ENCODE measurements at regions of chr14 and their contacts with region 1.

Region 1: DNA sequence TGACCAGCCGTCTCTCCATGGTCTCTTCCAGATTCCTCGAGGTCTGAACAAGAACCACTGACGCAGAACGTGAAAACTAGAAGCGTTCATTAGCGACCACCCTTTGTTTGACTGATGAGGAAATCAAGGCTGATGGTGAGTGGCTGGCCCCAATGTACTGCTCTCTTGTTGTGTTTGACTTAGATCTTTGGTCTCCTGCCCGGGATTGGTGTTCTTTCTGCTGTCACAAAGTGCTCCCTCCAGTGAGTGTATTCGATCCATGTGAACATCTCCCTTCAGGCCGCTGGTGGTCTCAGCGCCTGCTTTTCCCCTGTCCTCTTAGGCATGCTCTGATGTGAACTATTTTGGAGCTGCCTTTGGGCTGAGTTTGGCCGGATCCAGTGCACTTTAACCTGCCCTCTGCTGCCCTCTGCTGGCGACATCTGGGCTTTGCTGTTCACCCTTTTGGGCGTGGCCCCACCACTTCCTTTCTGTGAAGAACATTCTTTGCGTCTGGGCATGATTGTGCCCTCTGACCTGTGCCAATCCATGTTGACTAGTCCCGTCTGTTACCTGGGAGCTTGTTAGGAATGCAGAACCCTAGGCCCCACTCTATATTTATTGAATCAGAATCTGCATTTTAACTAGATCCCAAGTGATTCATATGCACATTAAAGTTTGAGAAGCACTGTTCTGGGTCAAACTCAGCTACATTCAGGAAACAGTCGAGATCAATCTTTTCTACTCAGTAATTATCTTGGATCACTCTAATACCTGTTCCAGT is 279.2 kb downstream of the TTC6 start:
- DNase-seq: peak; percentile 71 to 83
- ATAC-seq: peak; percentile 67 to 92 (median 81)
- H3K4me3 ChIP-seq: no peak overlapping the region
- H3K27ac ChIP-seq: no peak overlapping the region
- H3K4me1 ChIP-seq: peaks cover 0 to 10% (median 0%) of the 10 kb centered on the region in 9 donors
- H3K27me3 ChIP-seq: no peaks in the 10 kb centered on the region
- CTCF ChIP-seq: peak; percentile 66 to 91 (median 83)

Region 2: DNA sequence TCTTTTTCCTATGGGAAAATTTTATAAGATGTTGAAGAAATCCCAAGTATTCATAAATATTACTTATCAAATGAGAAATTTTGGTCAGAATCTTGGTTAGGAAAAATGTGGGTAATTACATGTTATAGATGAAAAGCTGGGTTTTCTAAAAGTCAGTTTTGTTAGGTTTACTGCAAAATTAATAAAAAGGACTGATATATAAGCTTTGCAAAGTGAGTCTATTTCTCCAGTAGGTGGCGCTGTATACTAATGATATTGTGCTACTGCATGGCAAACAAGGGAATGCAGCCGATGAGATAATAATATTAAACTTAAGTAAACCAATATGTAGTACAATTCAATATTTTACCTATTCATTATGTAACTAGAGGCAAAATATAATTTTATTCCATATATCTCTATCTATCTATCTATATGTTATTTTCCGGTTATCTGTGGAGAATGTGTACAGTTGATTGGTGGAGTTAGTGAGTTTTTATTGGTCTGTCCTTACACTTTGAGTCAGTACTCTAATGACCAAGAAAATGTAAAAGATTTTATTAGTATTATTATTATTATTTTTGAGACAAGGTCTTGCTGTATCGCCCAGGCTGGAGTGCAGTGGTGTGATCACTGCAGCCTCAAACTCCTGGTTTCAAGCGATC is 643.9 kb before region 1 on chr14:
- intact Hi-C with region 1: loop called in 1 of 10 experiments (anchors 5 kb)
- DNase-seq: peak in 1 of 2 donors; percentile 16
- ATAC-seq: peak in 1 of 8 donors; percentile 55
- H3K4me3 ChIP-seq: no peak overlapping the region
- H3K27ac ChIP-seq: no peak overlapping the region
- H3K4me1 ChIP-seq: no peaks in the 10 kb centered on the region
- H3K27me3 ChIP-seq: no peaks in the 10 kb centered on the region
- CTCF ChIP-seq: peak; percentile 42 to 88 (median 79)

Region 3: DNA sequence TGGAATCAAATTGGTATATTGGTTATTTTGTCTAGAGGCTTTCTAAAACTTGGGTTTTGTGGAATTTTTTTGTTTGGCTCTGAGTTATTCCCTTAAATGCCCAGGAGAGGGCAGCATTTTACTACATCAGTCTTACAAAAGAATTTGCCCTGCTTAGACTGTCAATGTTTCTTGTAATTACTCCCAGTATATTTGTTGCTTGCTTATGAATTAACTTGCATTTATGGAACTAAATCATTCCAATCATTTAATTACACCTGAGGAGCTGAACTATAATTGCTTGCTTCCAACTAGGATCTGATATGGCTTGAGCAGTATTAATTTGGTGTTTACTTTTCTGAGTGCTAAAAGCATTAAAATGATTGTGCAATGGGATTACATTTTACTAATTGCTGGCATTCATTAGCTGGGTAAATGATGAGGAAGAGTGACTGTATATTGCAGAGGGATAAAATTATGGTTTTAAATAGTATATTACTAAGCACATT is 628.1 kb before region 1 on chr14:
- intact Hi-C with region 1: loop called in 9 of 10 experiments (anchors 2 to 10 kb)
- DNase-seq: no peak
- ATAC-seq: no peak
- H3K4me3 ChIP-seq: no peak overlapping the region
- H3K27ac ChIP-seq: no peak overlapping the region
- H3K4me1 ChIP-seq: no peaks in the 10 kb centered on the region
- H3K27me3 ChIP-seq: no peaks in the 10 kb centered on the region
- CTCF ChIP-seq: peak; percentile 52 to 88 (median 76)

Region 4: DNA sequence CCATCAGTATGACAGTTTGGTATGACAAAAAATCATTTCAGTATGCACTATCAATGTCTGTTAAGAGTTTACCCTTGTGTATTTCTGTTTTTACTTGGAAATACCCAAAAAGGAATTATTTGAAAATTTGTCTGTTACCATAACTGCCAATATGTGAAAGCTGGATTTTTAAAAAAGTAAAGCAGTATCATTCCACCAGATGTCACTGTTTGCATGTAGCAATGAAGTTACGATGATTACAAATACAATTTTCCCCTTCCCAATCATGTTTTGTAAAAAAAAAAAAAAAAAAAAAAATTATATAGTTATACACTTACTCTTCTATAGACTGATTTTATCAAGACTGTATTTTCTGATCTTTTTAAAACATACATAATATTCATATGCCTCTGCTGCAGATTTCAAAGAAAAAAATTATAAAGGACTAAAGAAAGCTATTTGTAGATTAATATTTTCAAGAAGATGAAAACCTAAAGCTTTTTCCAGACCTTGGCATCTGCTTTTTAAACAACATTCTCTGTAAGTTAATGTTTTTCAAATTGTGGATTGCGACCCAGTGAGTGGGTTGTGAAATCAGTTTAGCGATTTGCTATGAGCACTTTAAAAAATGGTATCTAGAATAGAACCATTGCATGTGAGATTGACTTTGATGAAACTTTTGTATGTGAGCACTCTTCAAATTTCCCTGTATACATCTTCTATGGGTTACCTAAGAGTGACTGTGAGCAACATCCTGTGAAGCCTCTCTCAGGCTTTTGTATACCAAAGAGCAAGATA is 165.0 kb before region 1 on chr14:
- intact Hi-C with region 1: loop called in 6 of 10 experiments (anchors 2 to 10 kb)
- DNase-seq: no peak
- ATAC-seq: no peak
- H3K4me3 ChIP-seq: no peak overlapping the region
- H3K27ac ChIP-seq: no peak overlapping the region
- H3K4me1 ChIP-seq: no peaks in the 10 kb centered on the region
- H3K27me3 ChIP-seq: peaks cover 0 to 35% (median 0%) of the 10 kb centered on the region in 7 donors
- CTCF ChIP-seq: peak in 7 of 9 donors; percentile 18 to 54 (median 41)

Region 5: DNA sequence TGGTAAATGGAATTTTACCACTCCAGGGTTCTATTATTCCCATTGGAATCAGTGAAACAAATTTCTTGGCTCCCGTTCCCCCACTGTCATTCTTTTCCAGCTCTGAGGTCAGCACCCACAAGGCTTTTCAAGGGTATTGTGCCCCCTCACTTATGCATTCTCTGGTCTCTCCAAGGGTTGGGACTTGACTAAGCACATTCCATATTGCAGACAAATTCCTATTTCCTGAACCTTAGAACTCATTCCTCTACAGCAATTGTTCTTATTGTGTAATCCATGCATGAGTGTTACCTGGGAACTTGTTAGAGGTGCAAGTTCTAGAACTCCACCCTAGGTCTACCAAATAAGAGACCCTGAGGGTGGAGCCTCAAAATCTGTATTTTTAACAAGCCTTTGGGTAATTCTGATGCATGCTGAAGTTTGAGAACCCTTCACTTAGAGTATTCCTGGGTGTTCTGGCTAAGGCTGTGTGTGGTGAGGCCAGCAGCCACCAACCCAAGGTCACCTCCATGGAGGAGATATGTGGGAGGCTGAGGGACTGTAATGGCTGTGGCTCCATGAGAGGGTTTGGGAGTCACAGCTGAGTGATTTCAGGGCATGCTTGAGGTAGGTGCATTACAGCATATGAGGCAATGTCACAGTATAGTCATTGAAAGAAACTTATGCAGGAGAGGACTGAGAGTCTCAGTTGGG is 128.3 kb before region 1 on chr14:
- intact Hi-C with region 1: no loop called
- DNase-seq: no peak
- ATAC-seq: no peak
- H3K4me3 ChIP-seq: no peak overlapping the region
- H3K27ac ChIP-seq: no peak overlapping the region
- H3K4me1 ChIP-seq: no peaks in the 10 kb centered on the region
- H3K27me3 ChIP-seq: no peaks in the 10 kb centered on the region
- CTCF ChIP-seq: no peak

Measured in heart right ventricle (tissue), 16 donors.